ENCODE measurements at regions of chr19 and their contacts with region 1.

Region 1: DNA sequence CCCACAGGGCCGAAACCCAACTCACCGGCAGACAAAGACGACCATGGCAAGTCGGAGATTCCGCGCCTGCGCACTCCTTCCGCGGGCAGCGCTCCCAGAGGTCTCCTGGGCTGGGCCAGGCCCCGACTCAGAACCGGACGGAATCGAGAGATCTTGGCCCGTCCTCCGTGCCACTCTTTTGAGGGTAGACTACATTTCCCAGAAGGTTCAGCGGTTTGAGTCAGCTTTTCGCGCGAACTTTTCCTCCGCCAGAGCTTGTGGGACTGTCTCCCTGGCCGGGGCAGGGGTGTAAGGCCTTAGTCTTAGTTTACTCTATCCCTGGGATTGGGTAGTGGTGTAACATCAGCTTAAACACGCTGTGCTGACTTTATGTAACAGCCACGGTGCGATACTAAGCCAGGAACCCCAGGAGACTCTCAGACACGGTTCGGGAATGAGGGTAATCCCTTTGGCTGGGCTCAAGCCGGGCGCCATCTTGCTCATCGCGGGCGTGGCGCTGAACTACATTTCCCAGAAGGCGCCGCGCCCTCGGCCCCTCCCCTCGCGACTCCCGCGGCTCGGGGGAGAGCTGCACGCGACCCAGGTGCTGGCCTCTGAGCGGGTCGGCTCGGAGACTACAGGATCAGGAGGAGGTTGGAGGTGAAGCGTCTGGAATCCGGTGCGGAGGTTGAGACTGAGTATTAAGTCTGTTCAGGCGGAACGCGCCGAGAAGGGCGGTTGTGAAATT is at the start of gene ZNF260:
- DNase-seq: peak; percentile 86 to 98
- H3K4me3 ChIP-seq: peak within 1 kb of the TSS; percentile 73 to 92
- H3K27ac ChIP-seq: peak within 1 kb of the TSS; percentile 89 to 92
- H3K4me1 ChIP-seq: peaks cover 0 to 4% of the 10 kb centered on the region in 2 donors
- H3K27me3 ChIP-seq: no peaks in the 10 kb centered on the region
- CTCF ChIP-seq: no peak
- total RNA-seq, gene ZNF260: 2.1 TPM

Region 2: DNA sequence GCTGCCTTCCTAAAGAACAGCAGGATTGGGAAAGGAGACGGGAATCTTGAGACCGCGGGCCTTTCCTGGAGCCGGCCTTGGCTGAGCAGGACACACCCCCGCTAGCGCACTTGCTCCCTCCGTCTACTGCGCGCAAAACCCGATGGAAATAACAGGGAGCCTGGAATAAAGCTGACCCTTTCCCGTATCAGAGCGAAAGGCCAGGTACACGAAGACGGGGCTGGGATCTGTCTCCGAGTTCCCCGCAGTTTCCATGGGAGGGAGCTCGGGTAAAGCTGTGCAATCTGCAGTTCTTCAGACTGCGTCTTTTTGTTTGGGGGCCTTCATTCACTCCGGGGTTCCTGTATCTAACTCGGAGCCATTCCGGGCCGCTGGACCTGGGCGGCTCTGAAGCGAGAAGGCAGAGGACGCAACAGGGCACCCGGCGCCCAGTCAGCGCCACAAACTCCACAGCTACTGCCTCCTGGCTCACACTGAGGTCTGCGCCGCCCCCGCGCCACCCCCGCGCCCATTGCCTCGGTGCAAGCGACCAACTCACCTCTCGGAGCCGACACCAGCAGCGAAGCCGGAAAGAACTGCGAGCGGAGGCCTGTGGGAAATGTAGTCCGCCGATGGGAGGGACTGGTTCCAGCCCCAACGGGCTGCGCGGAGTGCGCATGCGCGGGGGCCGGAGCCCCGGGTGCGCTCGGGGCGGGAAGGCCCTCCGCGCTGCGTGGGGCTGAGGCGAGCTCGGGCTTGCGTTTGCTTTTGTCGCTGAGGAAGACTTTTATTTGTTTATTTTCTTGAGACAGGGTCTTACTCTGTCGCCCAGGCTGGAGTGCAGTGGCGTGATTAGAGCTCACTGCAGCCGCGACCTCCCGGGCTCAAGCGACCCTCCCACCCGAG is 149.5 kb before region 1 on chr19 and contains the start of gene ZFP14:
- intact Hi-C with region 1: loop called (anchors 1 kb)
- DNase-seq: peak; percentile 77 to 95
- H3K4me3 ChIP-seq: peak within 1 kb of the TSS; percentile 66 to 92
- H3K27ac ChIP-seq: peak within 1 kb of the TSS; percentile 67 to 89
- H3K4me1 ChIP-seq: peaks cover 3 to 8% of the 10 kb centered on the region in 2 donors
- H3K27me3 ChIP-seq: no peaks in the 10 kb centered on the region
- CTCF ChIP-seq: no peak
- total RNA-seq, gene ZFP14: 1.2 TPM

Region 3: DNA sequence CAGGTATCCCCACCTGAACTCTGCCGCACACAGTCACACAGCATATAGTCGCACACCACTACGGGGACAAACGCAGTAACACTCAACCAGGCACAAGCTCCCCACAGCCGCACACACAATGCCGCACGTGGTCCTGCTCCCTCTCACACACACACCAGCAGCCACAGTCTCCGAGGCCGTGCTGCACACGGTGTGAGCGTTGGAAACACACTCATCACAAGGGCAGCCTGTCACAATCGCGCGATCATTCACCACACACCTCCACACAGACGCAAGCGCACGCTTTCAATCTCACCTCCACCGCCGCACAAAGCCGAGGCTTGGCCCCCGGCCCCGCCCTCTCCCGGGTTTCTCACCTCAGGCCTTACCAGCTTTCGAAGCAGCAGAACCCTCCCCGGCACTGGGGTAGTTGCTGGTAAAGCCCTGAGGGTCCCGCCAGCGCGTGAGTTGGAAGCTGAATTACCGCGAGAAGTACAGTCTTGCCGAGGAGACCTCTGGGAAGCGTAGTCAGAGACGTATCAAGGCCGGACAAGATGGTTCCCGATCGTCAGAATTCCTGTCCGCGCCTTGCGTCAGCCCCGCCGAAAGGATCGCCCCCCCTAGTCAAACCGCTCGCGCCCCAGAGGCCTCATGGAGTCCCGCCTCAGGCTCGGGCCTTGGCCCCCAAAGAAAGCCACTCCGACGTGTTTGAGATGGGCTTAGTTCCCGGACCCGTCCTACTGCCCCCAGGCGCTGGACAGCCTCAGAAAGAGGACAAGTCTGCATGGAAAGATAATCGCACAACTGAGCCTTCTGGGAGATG is 39.0 kb before region 1 on chr19 and contains the start of gene ZNF566:
- intact Hi-C with region 1: loop called (anchors 1 kb)
- DNase-seq: peak; percentile 81 to 96
- H3K4me3 ChIP-seq: peak within 1 kb of the TSS; percentile 71 to 72
- H3K27ac ChIP-seq: peak within 1 kb of the TSS; percentile 92 to 94
- H3K4me1 ChIP-seq: peaks cover 0 to 5% of the 10 kb centered on the region in 2 donors
- H3K27me3 ChIP-seq: no peaks in the 10 kb centered on the region
- CTCF ChIP-seq: peak in 1 of 3 experiments; percentile 13
- total RNA-seq, gene ZNF566: 9.9 TPM

Region 4: GRCh38 chr19:36665832-36666231 is 137.5 kb after region 1 on chr19:
- intact Hi-C with region 1: loop called (anchors 5 kb)
- DNase-seq: no peak
- H3K4me3 ChIP-seq: peak overlapping the region; percentile 74 to 92
- H3K27ac ChIP-seq: no peak overlapping the region
- H3K4me1 ChIP-seq: peaks cover 0 to 3% of the 10 kb centered on the region in 2 donors
- H3K27me3 ChIP-seq: no peaks in the 10 kb centered on the region
- CTCF ChIP-seq: no peak

Region 5: GRCh38 chr19:36850559-36851442 is 322.4 kb after region 1 on chr19 and contains the start of gene ZNF345:
- intact Hi-C with region 1: loop called (anchors 2 kb)
- DNase-seq: peak; percentile 77 to 96
- H3K4me3 ChIP-seq: peak within 1 kb of the TSS; percentile 78 to 84
- H3K27ac ChIP-seq: peak within 1 kb of the TSS; percentile 83 to 88
- H3K4me1 ChIP-seq: peaks cover 0 to 5% of the 10 kb centered on the region in 2 donors
- H3K27me3 ChIP-seq: no peaks in the 10 kb centered on the region
- CTCF ChIP-seq: no peak
- total RNA-seq, gene ZNF345: 8.0 TPM

Region 6: DNA sequence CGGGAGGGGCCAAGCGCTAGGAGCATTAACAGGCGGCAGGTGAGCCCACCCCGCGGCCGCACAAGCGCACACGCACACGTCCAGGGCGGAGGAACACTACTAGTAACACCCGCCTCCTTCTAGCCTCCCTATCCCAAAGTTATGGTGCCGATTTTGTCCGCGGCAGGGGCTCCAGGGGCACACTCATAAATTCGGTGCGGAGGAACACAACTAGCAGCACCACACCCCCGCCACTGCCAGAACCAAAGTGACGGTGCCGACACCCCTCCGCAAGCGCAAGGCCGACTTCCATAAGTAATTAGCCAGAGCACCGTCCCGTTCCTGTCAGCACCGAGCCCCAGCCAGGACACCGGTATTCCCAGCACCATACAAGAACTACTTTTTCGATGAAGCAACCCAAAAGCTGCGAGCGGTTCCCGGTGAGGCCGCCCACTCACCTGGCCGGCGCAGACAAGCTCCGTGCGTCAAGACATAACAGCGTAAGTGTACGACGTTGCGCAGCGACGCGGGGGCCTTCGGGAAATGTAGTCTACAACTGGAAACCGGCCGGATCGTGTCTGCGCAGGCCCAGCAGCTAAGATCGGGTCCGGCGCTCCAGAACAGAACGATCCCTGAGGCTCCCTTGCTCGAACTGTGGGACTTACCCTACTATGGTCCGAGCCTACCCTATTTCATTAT is 1066.1 kb after region 1 on chr19 and contains the starts of genes ZNF540 and ZNF571:
- intact Hi-C with region 1: loop called (anchors 1 kb)
- DNase-seq: peak; percentile 81 to 96
- H3K4me3 ChIP-seq: peak within 1 kb of the TSS; percentile 71 to 82
- H3K27ac ChIP-seq: peak within 1 kb of the TSS; percentile 82 to 92
- H3K4me1 ChIP-seq: peaks cover 0 to 3% of the 10 kb centered on the region in 2 donors
- H3K27me3 ChIP-seq: no peaks in the 10 kb centered on the region
- CTCF ChIP-seq: no peak
- total RNA-seq, gene ZNF540: not detected
- total RNA-seq, gene ZNF571: 0.11 TPM

Measured in ascending aorta (tissue), 2 donors.